Mammary epithelial cell (primary cell): ENCODE measurements at regions of chr16 and their contacts with region 1.

Region 1: GRCh38 chr16:1487395-1488053 is 1.2 kb downstream of the PTX4 start:
- DNase-seq: no peak
- H3K4me3 ChIP-seq: no peak overlapping the region
- H3K27ac ChIP-seq: no peak overlapping the region
- H3K4me1 ChIP-seq: peaks cover 6% of the 10 kb centered on the region
- H3K27me3 ChIP-seq: no peaks in the 10 kb centered on the region
- CTCF ChIP-seq: no peak

Region 2: DNA sequence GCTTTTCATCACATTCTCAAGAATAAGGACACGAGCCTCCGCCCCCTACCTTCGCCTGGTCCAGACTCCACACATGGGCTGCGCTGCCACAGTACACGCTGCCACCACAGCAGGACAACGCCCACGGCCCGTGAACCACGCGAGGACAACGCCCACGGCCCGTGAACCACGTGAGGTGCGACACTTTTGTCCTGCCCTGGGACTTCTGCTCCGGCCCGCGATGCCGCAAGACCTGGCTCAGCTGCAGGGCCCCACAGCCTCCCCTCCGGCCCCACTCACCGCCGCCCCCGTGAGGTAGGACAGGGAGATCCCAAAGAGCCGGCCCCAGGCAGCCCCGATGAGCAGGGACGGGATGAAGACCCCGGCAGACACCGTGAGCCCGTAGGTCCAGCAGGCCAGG is 37.3 kb before region 1 on chr16:
- CTCF ChIA-PET with region 1: no interaction called
- dilution Hi-C with region 1: loop called (anchors 5 kb)
- in situ Hi-C with region 1: no loop called
- intact Hi-C with region 1: no loop called
- DNase-seq: no peak
- H3K4me3 ChIP-seq: no peak overlapping the region
- H3K27ac ChIP-seq: no peak overlapping the region
- H3K4me1 ChIP-seq: no peaks in the 10 kb centered on the region
- H3K27me3 ChIP-seq: no peaks in the 10 kb centered on the region
- CTCF ChIP-seq: no peak

Region 3: GRCh38 chr16:1509307-1510221 is 22.0 kb after region 1 on chr16:
- CTCF ChIA-PET with region 1: no interaction called
- dilution Hi-C with region 1: no loop called
- in situ Hi-C with region 1: no loop called
- intact Hi-C with region 1: no loop called
- DNase-seq: no peak
- H3K4me3 ChIP-seq: no peak overlapping the region
- H3K27ac ChIP-seq: no peak overlapping the region
- H3K4me1 ChIP-seq: no peaks in the 10 kb centered on the region
- H3K27me3 ChIP-seq: no peaks in the 10 kb centered on the region
- CTCF ChIP-seq: no peak